CD4-positive, alpha-beta memory T cell (primary cell): ENCODE measurements at regions of chr9 and their contacts with region 1.

Region 1: GRCh38 chr9:130866474-130866965 is 30.1 kb downstream of the QRFP start:
- DNase-seq: peak in 4 of 5 donors; percentile 19 to 34 (median 32)
- H3K4me3 ChIP-seq: no peak overlapping the region
- H3K4me3 Mint-ChIP-seq: no peak overlapping the region
- H3K27ac ChIP-seq: no peak overlapping the region
- H3K27ac Mint-ChIP-seq: peak overlapping the region in 2 of 7 donors; percentile 68 to 79
- H3K4me1 ChIP-seq: no peaks in the 10 kb centered on the region
- H3K4me1 Mint-ChIP-seq: peaks cover 4 to 7% (median 6%) of the 10 kb centered on the region in 4 donors
- H3K27me3 ChIP-seq: no peaks in the 10 kb centered on the region
- H3K27me3 Mint-ChIP-seq: no peaks in the 10 kb centered on the region

Region 2: GRCh38 chr9:130461218-130461630 is 405.3 kb before region 1 on chr9:
- CTCF ChIA-PET with region 1: interaction called, 4 read pairs
- POLR2A ChIA-PET with region 1: no interaction called
- intact Hi-C with region 1: loop called (anchors 5 kb)
- DNase-seq: peak; percentile 53 to 68 (median 58)
- H3K4me3 ChIP-seq: no peak overlapping the region
- H3K4me3 Mint-ChIP-seq: no peak overlapping the region
- H3K27ac ChIP-seq: no peak overlapping the region
- H3K27ac Mint-ChIP-seq: no peak overlapping the region
- H3K4me1 ChIP-seq: no peaks in the 10 kb centered on the region
- H3K4me1 Mint-ChIP-seq: no peaks in the 10 kb centered on the region
- H3K27me3 ChIP-seq: no peaks in the 10 kb centered on the region
- H3K27me3 Mint-ChIP-seq: peaks cover 7 to 9% of the 10 kb centered on the region in 2 donors

Region 3: DNA sequence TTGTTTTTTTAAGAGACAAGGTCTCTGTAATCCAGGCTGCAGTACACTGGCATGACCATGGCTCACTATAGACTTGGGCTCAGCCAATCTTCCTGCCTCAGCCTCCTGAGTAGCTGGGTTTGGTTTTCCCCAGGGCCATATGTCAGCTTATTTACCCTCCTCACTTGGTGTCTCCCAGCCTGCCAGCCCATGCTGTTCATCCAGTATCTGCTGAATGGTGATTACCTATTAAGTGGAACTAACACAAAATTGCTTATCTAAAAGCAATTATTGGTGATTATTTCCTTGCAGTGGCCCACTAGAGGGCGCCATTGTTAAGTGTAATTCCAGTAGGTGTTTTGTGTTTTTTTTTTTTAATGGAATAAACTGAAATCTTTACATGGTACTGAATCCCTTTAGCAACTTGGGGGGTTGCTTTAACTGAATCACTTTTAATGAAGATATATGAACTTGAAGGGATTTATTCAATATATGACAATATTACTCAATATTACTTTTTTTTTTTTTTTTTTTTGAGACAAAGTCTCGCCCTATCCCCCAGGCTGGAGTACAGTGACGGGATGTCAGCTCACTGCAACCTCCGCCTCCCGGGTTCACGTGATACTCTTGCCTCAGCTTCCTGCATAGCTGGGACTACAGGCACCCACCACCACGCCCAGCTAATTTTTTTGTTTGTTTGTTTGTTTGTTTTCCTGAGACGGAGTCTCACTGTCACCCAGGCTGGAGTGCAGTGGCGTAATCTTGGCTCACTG is 159.1 kb before region 1 on chr9:
- CTCF ChIA-PET with region 1: interaction called, 137 read pairs
- POLR2A ChIA-PET with region 1: interaction called, 5 read pairs
- intact Hi-C with region 1: loop called (anchors 1 kb)
- DNase-seq: peak; percentile 66 to 72 (median 67)
- H3K4me3 ChIP-seq: no peak overlapping the region
- H3K4me3 Mint-ChIP-seq: no peak overlapping the region
- H3K27ac ChIP-seq: no peak overlapping the region
- H3K27ac Mint-ChIP-seq: peak overlapping the region in 5 of 7 donors; percentile 6 to 79 (median 60)
- H3K4me1 ChIP-seq: peaks cover 5% of the 10 kb centered on the region
- H3K4me1 Mint-ChIP-seq: peaks cover under 1 to 7% (median 4%) of the 10 kb centered on the region in 4 donors
- H3K27me3 ChIP-seq: no peaks in the 10 kb centered on the region
- H3K27me3 Mint-ChIP-seq: no peaks in the 10 kb centered on the region

Region 4: GRCh38 chr9:130854092-130854491 is 12.4 kb before region 1 on chr9:
- CTCF ChIA-PET with region 1: interaction called, 12 read pairs
- POLR2A ChIA-PET with region 1: no interaction called
- intact Hi-C with region 1: no loop called
- DNase-seq: no peak
- H3K4me3 ChIP-seq: no peak overlapping the region
- H3K4me3 Mint-ChIP-seq: no peak overlapping the region
- H3K27ac ChIP-seq: no peak overlapping the region
- H3K27ac Mint-ChIP-seq: peak overlapping the region in 1 of 7 donors; percentile 19
- H3K4me1 ChIP-seq: peaks cover 3% of the 10 kb centered on the region
- H3K4me1 Mint-ChIP-seq: peaks cover 0 to 4% (median under 1%) of the 10 kb centered on the region in 4 donors
- H3K27me3 ChIP-seq: no peaks in the 10 kb centered on the region
- H3K27me3 Mint-ChIP-seq: no peaks in the 10 kb centered on the region

Region 5: DNA sequence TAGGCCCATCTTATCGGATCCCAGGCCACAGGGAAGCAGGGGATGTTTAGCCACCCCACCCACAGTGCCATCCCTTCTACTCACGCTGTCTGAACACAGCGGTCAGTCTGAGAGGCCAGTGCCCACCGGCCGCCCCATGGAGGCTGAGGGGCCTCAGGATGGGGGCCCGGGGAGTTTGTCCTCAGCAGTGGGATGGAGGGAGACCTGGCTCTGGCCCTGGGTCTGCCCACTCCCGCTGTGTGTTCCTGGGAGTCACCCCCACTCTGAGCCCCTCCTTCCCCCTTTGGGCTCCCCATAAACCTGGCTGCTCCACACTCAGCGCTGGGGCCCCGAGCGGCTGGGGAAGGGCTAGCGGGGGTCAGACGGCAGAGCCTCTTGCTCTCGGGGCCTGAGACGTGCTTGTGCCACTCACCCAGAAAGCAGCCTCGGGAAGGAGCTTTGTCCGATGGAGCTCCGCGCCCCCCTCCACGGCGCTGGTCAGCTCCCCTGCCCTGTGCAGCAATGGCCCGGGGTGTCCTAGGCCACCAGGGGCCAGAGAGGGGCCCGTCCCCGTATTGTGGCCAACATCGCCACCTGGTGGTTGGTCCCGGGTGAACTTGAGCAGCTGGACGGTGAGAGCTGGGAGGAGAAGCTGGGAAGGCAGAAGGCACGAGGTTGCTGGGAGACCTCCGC is 131.5 kb after region 1 on chr9:
- CTCF ChIA-PET with region 1: no interaction called
- POLR2A ChIA-PET with region 1: no interaction called
- intact Hi-C with region 1: no loop called
- DNase-seq: no peak
- H3K4me3 ChIP-seq: no peak overlapping the region
- H3K4me3 Mint-ChIP-seq: no peak overlapping the region
- H3K27ac ChIP-seq: no peak overlapping the region
- H3K27ac Mint-ChIP-seq: no peak overlapping the region
- H3K4me1 ChIP-seq: no peaks in the 10 kb centered on the region
- H3K4me1 Mint-ChIP-seq: peaks cover 0 to 3% (median 1%) of the 10 kb centered on the region in 4 donors
- H3K27me3 ChIP-seq: no peaks in the 10 kb centered on the region
- H3K27me3 Mint-ChIP-seq: peaks cover 18 to 19% of the 10 kb centered on the region in 2 donors

Region 6: DNA sequence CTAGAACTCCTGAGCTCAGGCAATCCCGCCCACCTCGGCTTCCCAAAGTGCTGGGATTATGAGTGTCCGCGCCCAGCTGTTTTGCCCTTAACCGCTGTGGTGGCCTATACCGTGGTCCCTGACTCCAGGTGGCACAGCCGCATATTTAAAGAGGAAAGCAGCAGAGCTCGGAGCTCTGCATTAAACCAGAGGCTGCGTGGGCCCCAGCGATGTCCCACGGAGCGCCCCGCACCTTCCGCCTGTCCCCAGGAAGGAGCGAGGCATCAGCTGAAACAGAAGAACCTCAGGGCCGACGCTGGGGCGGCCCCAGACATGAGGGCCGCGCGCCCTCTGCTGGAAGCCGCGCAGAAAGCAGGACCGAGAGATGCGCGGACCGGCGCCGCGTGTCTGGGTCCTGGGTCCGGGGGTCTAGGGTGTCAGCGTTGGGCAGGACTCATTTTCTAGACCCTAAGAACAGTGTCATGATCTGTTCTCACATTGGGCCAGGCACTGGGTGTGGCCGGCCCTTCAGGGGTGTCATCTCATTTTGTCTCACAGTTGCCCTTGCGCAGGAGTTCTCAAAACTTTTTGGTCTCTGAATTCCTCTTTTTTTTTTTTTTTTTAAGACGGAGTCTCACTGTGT is 180.2 kb after region 1 on chr9:
- CTCF ChIA-PET with region 1: interaction called, 37 read pairs
- POLR2A ChIA-PET with region 1: no interaction called
- intact Hi-C with region 1: loop called (anchors 1 kb)
- DNase-seq: peak; percentile 52 to 74 (median 64)
- H3K4me3 ChIP-seq: no peak overlapping the region
- H3K4me3 Mint-ChIP-seq: peak overlapping the region in 5 of 8 donors; percentile 14 to 61 (median 33)
- H3K27ac ChIP-seq: no peak overlapping the region
- H3K27ac Mint-ChIP-seq: no peak overlapping the region
- H3K4me1 ChIP-seq: no peaks in the 10 kb centered on the region
- H3K4me1 Mint-ChIP-seq: peaks cover 0 to 5% (median 2%) of the 10 kb centered on the region in 4 donors
- H3K27me3 ChIP-seq: no peaks in the 10 kb centered on the region
- H3K27me3 Mint-ChIP-seq: peaks cover 7 to 10% of the 10 kb centered on the region in 2 donors